IMR-90 (cell line): ENCODE measurements at regions of chr6 and their contacts with region 1.

Region 1: DNA sequence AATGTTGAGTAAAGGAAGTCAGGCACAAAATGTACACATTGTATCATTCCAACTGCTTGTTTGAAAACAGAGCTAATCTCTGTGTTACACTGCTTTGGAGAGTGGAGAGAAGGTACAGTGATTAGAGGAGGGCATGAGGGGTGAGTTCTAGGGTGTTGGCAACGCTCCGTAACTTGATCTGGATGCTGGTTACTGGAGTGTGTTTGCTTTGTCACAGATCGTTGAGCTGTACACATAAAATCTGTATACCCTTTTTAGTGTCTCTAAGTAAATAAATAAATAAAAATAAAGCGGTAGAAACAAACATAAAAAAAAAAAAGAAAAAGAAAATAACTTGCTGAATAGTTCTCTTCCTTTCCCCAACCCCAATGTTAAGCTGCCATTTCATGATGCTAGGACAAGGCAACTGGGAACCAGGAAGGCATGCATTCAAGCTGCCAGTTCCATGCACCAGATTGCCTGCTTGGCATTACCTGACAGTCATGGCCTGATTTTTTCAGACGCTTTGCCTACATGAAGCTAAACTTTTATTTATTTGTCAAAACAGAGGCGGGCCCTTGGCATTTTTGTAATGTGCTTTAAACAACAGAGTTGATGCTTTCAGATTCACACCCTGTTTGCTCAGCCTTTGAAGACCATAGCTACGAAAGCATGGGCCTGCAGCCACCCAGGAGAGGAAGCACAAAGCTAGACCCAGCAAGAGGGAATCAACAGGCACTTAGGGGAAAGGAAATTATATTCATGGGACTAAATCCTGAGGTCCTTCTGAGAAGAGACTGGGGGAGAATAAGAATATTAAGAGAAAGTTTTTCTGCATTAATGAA is 21.2 kb downstream of the TNFRSF21 start:
- DNase-seq: no peak
- ATAC-seq: no peak; the same call in 1 of the 2 replicates
- H3K4me3 ChIP-seq: no peak overlapping the region
- H3K27ac ChIP-seq: no peak overlapping the region
- H3K4me1 ChIP-seq: peaks cover 2% of the 10 kb centered on the region; the same call in 1 of the 2 replicates
- H3K27me3 ChIP-seq: no peaks in the 10 kb centered on the region
- CTCF ChIP-seq: no peak
- POLR2A ChIP-seq: no peak
- RAD21 ChIP-seq: no peak

Region 2: GRCh38 chr6:47483853-47484546 is 195.5 kb after region 1 on chr6:
- CTCF ChIA-PET with region 1: interaction called, 10 read pairs
- POLR2A ChIA-PET with region 1: no interaction called
- dilution Hi-C with region 1: no loop called
- in situ Hi-C with region 1: no loop called
- intact Hi-C with region 1: no loop called
- DNase-seq: peak; percentile 35
- ATAC-seq: no peak
- H3K4me3 ChIP-seq: no peak overlapping the region
- H3K27ac ChIP-seq: no peak overlapping the region
- H3K4me1 ChIP-seq: peaks cover 2% of the 10 kb centered on the region
- H3K27me3 ChIP-seq: no peaks in the 10 kb centered on the region
- CTCF ChIP-seq: no peak
- POLR2A ChIP-seq: no peak
- RAD21 ChIP-seq: no peak

Region 3: DNA sequence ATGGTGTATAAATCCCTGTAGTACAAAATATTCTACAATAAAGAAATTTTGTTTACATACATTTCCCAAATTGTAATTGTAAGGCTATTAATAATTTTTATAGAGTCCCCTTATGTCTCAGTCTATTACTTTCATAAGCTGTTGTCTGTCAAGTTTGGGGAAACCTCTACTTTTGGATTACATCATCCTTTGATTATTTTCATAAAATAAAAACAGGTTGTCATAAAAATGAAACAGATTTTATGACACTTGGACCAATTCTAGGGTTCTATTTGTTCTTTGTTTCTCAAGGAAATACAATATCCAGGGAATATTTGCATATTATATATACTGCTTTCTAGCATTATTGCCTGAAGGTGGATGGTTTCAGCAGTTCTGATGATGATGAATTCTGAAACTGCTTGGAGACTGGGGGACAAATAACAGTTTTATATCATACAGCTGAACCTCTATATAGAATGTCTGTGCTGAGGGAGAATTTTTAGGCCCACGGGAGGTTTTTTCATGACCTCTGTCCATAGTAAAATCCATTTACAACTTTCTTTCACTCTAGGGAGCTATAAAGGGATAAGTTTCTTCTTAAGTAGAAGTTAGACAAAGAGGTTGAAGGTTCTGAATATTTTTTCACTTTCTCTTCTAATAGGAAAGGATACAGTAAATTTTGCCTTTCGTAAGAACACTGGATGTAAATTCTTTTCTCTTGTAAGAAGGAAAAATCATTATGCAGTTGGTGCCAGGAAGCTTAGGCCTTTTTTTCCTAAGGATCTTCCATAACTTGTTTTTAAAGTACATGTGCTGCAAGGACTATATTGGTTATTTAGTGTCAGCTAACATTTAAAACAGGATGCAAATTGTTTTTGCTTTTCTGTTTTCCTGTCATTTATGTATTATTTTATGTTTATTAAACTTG is 247.1 kb after region 1 on chr6:
- CTCF ChIA-PET with region 1: no interaction called
- POLR2A ChIA-PET with region 1: no interaction called
- dilution Hi-C with region 1: no loop called
- in situ Hi-C with region 1: no loop called
- intact Hi-C with region 1: no loop called
- DNase-seq: no peak
- ATAC-seq: no peak
- H3K4me3 ChIP-seq: no peak overlapping the region
- H3K27ac ChIP-seq: no peak overlapping the region
- H3K4me1 ChIP-seq: no peaks in the 10 kb centered on the region
- H3K27me3 ChIP-seq: no peaks in the 10 kb centered on the region
- CTCF ChIP-seq: no peak
- POLR2A ChIP-seq: no peak
- RAD21 ChIP-seq: no peak